ENCODE measurements at regions of chr12 and their contacts with region 1.

Region 1: DNA sequence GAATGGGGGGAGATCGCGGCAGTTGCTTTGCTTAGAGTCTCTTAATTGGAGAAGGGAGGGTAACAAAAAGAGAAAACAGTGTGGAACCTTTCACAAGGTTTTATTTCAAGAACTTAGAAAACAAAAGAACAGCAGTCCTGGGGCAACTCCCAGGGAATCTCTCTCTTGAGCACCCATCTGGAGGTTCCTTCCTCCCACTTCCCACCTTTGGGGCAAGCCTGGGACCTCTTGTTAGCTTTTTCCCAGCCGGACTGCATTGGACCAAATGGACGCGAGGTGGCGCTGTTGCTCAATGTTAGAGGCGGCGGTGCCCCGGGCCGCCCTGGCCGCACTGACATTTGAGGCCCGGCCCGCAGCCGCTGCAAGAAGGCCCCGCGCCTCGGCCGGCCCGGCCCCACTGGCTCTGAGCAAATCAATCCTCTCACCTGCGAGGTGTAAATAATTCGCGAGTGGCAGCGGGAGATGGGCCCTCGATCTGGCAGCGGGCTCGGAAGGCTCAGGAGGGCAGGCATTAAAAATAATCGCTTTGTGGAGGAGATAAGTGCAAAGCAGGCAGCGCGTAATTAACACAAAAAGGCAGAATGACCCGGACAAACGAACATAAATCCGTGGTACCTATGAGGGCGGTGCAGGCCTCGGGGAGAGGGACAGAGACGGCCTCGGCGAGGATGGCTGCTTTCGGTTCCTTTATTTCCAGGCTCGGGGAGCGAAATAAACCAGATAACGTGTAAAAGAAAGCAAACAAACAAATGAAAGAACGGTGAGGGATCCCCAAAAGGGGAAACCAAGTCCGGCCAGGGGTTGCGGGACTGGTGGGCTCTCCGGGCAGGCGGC is 2.7 kb upstream of the HOXC8 start:
- DNase-seq: peak; percentile 79
- H3K4me3 ChIP-seq: no peak overlapping the region
- H3K27ac ChIP-seq: no peak overlapping the region
- H3K4me1 ChIP-seq: no peaks in the 10 kb centered on the region
- H3K27me3 ChIP-seq: peaks cover 79 to 89% of the 10 kb centered on the region in 2 experiments
- CTCF ChIP-seq: peak; percentile 84 to 86
- POLR2A ChIP-seq: no peak

Region 2: GRCh38 chr12:53984901-53985709 is 21.0 kb before region 1 on chr12 and contains the start of gene HOXC10:
- CTCF ChIA-PET with region 1: interaction called, 24 read pairs
- POLR2A ChIA-PET with region 1: no interaction called
- dilution Hi-C with region 1: no loop called
- intact Hi-C with region 1: no loop called
- DNase-seq: peak; percentile 71
- H3K4me3 ChIP-seq: no peak within 1 kb of the TSS
- H3K27ac ChIP-seq: no peak within 1 kb of the TSS
- H3K4me1 ChIP-seq: no peaks in the 10 kb centered on the region
- H3K27me3 ChIP-seq: peaks cover 89 to 93% of the 10 kb centered on the region in 2 experiments
- CTCF ChIP-seq: peak; percentile 47 to 72
- POLR2A ChIP-seq: no peak
- total RNA-seq, gene HOXC10: 0.44 TPM in 1 of 2 replicates, not detected in the other

Region 3: GRCh38 chr12:54017878-54018467 is 11.9 kb after region 1 on chr12:
- CTCF ChIA-PET with region 1: interaction called, 36 read pairs
- POLR2A ChIA-PET with region 1: no interaction called
- dilution Hi-C with region 1: no loop called
- intact Hi-C with region 1: no loop called
- DNase-seq: peak; percentile 65
- H3K4me3 ChIP-seq: peak overlapping the region in 1 of 3 experiments; percentile 30
- H3K27ac ChIP-seq: no peak overlapping the region
- H3K4me1 ChIP-seq: peaks cover 3% of the 10 kb centered on the region
- H3K27me3 ChIP-seq: peaks cover 84 to 93% of the 10 kb centered on the region in 2 experiments
- CTCF ChIP-seq: no peak
- POLR2A ChIP-seq: no peak

Region 4: DNA sequence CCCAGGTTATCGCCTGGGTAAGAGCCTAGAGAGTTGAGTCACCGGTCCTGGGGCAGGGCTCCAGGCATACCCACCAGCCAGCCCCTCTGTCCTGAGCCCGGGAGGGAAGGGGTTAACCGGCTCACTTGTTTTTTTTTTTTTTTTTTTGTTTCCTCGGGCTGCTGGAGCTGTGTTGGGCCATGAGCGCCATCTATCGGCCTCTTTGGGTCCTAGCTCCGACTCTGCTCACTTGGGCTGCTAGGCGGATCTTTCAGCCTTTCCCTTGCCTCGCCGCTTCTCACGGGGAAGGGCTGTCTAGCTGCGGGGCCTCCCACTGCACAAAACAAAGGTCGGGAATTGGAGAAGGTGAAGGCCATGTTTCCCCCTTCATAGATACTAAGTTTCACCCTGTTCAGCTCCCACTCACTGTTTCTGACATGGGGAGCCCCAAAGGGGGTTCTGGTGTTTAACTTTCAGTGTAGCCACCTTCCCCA is 185.5 kb after region 1 on chr12:
- CTCF ChIA-PET with region 1: interaction called, 616 read pairs
- POLR2A ChIA-PET with region 1: no interaction called
- dilution Hi-C with region 1: no loop called
- intact Hi-C with region 1: loop called (anchors 1 kb)
- DNase-seq: peak; percentile 75
- H3K4me3 ChIP-seq: no peak overlapping the region
- H3K27ac ChIP-seq: no peak overlapping the region
- H3K4me1 ChIP-seq: no peaks in the 10 kb centered on the region
- H3K27me3 ChIP-seq: peaks cover 30 to 33% of the 10 kb centered on the region in 2 experiments
- CTCF ChIP-seq: peak; percentile 75 to 94
- POLR2A ChIP-seq: no peak

Region 5: DNA sequence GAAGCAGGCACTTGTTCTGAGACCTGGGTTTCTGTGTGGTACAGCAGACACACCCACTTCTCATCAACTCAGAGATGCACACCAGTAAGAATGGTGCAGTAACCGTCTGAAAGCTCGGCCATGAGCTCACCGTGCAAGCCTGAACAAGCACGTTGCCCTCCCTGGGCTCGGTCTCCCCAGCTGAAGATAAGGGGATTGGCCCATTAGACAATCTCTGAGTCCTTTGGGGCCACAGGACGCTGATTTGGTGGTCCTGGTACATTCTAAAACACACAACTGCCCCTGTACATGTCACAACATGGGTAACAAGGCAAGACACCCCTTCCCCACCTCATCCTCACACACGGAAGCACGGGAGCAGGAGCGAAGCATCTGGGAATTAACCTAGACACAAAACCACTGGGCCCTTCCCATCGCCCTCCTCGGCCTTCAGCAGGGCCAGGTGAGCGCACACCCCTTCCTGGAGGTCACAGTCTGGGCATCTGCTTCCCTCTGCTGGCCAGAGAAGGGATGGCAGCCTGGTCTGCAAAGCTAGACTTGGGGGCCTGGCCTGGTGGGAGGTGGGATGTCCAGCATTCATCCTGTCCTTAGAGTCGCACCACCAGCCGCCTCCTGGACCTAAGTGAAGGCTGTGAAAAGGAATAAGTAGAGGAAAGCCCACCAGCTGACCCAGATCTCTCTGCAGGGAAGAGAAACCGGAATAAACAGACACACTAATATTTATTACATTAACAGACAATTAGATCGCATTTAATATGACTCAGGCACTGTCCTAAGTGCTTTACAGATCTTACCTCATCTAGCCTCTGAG is 201.6 kb after region 1 on chr12:
- CTCF ChIA-PET with region 1: interaction called, 616 read pairs
- POLR2A ChIA-PET with region 1: no interaction called
- dilution Hi-C with region 1: no loop called
- intact Hi-C with region 1: loop called (anchors 1 kb)
- DNase-seq: peak; percentile 49
- H3K4me3 ChIP-seq: no peak overlapping the region
- H3K27ac ChIP-seq: no peak overlapping the region
- H3K4me1 ChIP-seq: no peaks in the 10 kb centered on the region
- H3K27me3 ChIP-seq: peaks cover 17 to 35% of the 10 kb centered on the region in 2 experiments
- CTCF ChIP-seq: peak; percentile 79 to 93
- POLR2A ChIP-seq: no peak

Region 6: DNA sequence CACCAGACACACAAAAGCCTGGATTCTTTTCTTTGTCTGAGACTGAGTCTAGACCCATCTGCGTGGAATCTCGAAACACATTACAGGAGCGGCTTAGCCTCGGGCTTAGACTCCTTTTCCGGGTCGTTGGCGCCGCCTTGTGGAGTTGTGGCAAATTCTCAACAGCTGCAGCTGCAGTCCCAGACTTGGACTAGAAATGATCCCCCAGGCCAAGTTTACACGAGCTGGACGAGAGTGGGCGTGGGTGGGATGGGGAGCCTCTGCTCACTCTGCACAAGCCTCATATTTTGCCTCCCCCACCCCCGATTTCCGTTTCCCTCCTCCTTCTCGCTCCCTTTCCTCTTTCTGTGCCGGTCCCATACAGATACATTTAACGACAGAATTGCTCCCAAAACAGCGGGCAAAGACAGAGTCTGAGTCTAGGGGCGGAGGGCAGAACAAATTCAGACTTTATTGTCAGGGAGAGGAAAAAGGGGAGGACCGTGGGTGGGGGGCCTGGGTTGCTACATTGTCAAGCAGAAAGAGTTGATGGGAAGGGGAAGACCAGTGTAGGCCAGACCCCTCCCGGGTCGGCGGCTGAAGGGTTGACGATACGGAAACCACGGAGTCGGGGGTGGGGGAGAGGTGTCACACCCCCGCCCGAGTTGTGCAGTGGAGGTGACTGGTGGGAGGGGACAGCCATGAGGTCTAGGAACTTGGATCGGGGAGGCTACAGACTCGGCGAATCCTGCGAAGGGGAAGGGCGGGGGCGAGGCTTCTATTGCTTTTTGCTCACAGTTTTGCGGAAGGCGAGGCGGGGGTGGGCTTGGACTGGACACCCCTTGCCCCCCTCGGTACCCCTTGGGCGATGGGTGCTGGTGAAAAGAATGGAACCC is 362.9 kb after region 1 on chr12:
- CTCF ChIA-PET with region 1: no interaction called
- POLR2A ChIA-PET with region 1: no interaction called
- dilution Hi-C with region 1: no loop called
- intact Hi-C with region 1: loop called (anchors 10 kb)
- DNase-seq: peak; percentile 85
- H3K4me3 ChIP-seq: peak overlapping the region; percentile 6 to 39 (median 23)
- H3K27ac ChIP-seq: no peak overlapping the region
- H3K4me1 ChIP-seq: peaks cover 33% of the 10 kb centered on the region
- H3K27me3 ChIP-seq: no peaks in the 10 kb centered on the region
- CTCF ChIP-seq: peak; percentile 91 to 92
- POLR2A ChIP-seq: no peak

Measured in endothelial cell of umbilical vein (primary cell).